Activated CD4-positive, alpha-beta T cell treated with anti-CD3 and anti-CD28 coated beads for 36 hours (primary cell): ENCODE measurements at regions of chr18 and their contacts with region 1.

Region 1: GRCh38 chr18:32494111-32494510 is 23.4 kb upstream of the GAREM1 start:
- DNase-seq: no peak
- ATAC-seq: no peak
- H3K4me3 Mint-ChIP-seq: no peak overlapping the region
- H3K27ac Mint-ChIP-seq: no peak overlapping the region
- H3K4me1 Mint-ChIP-seq: no peaks in the 10 kb centered on the region
- H3K27me3 Mint-ChIP-seq: peaks cover 15% of the 10 kb centered on the region

Region 2: GRCh38 chr18:32446780-32447179 is 47.3 kb before region 1 on chr18:
- CTCF ChIA-PET with region 1: no interaction called
- POLR2A ChIA-PET with region 1: no interaction called
- intact Hi-C with region 1: loop called in 1 of 2 experiments (anchors 5 kb)
- DNase-seq: no peak
- ATAC-seq: no peak
- H3K4me3 Mint-ChIP-seq: no peak overlapping the region
- H3K27ac Mint-ChIP-seq: no peak overlapping the region
- H3K4me1 Mint-ChIP-seq: no peaks in the 10 kb centered on the region
- H3K27me3 Mint-ChIP-seq: peaks cover 4% of the 10 kb centered on the region